ENCODE measurements at regions of chr3 and their contacts with region 1.

Region 1: DNA sequence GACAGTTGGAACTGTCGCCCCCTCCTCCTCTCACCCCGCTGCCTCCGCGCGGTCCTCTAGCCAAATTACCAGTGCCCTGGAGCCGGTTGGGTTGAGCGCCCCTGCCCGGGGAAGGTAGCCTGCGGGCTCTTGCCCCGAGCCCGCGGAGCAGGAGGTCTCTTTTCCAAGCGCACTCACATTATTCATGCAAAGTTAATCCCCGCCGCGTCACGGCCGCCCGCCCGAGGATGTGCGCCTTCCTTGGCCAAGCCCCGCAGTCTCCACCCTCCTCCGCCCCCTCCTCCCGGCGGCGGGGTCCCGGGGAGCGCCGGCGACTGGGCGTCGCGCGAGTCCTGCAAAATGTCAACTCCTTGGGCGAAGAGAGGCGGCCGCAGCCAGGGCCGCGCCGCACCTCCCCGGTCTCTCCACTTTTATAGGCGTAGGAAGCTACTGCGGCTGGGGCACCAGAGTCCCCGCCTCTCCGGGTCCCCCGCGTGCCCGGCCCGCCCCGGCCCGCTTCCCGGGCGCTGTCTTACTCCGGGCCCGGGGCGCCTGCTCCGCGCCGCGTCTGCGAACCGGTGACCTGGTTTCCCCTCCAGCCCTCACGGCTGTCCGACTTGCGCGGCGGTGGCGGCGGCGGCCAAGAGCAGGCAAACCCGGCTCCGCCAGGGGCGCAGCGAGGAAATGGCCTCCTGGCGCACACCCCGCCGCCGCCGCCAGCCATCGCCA is at the start of gene THRB:
- DNase-seq: peak; percentile 79 to 88 (median 85)
- ATAC-seq: peak; percentile 62 to 78 (median 76)
- H3K4me3 ChIP-seq: peak within 1 kb of the TSS; percentile 66 to 89 (median 76)
- H3K27ac ChIP-seq: peak within 1 kb of the TSS; percentile 80 to 97 (median 95)
- H3K4me1 ChIP-seq: peaks cover 0 to 42% (median 21%) of the 10 kb centered on the region in 12 donors
- H3K27me3 ChIP-seq: peaks cover 0 to 14% (median 0%) of the 10 kb centered on the region in 9 donors
- CTCF ChIP-seq: peak in 9 of 12 donors; percentile 6 to 60 (median 35)
- POLR2A ChIP-seq: peak in 1 of 2 donors; percentile 55
- total RNA-seq, gene THRB: 14.9 to 28.5 (median 21.6) TPM

Region 2: DNA sequence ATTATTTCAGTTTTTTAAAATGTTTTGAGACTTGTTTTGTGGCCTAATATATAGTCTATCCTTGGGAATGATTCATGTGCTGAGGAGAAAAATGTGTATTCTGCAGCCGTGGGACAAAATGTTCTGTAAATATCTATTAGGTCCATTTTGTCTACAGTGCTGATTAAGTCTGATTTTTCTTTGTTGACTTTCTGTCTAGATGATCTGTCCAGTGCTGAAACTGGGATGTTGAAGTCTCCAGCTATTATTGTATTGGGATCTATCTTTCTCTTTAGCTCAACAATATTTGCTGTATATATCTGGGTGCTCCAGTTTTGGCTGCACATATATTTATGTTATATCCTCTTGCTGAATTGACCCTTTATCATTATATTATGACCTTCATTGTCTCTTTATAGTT is 1206.5 kb before region 1 on chr3:
- intact Hi-C with region 1: no loop called
- DNase-seq: no peak
- ATAC-seq: no peak
- H3K4me3 ChIP-seq: no peak overlapping the region
- H3K27ac ChIP-seq: no peak overlapping the region
- H3K4me1 ChIP-seq: peaks cover 0 to 5% (median 0%) of the 10 kb centered on the region in 12 donors
- H3K27me3 ChIP-seq: no peaks in the 10 kb centered on the region
- CTCF ChIP-seq: no peak
- POLR2A ChIP-seq: no peak

Region 3: DNA sequence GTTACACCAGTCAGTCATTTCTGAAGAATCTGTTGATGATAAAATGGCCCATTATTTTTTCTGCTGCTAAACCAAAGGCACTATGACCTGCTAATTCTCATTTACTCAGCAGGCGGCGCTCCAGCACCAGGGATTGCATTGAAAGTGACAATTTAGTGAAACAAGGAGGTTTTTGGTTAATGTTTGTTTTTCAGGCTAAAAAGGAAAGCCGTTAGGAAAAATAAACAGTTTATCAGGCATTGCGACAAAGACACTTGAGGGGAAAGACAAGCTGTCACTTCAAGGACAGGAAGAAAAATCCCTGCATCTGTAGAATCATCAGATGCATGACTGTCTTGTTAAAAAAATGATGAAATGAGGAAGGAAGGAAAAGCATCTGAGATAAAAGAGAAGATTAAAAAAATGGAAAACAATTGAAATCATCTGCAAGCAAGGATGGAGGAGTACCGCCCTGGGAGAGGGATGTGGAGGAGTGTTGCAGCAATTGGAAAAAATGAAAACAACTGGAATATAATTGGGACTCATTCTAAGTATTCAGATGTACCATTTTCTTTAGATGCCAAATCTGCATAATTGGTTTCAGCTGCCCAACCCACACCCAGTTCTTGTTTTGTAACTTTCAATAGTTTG is 495.6 kb before region 1 on chr3:
- intact Hi-C with region 1: loop called in 1 of 10 experiments (anchors 10 kb)
- DNase-seq: peak; percentile 48 to 77 (median 63)
- ATAC-seq: peak in 1 of 4 donors; percentile 30
- H3K4me3 ChIP-seq: no peak overlapping the region
- H3K27ac ChIP-seq: no peak overlapping the region
- H3K4me1 ChIP-seq: peaks cover 0 to 16% (median 7%) of the 10 kb centered on the region in 12 donors
- H3K27me3 ChIP-seq: no peaks in the 10 kb centered on the region
- CTCF ChIP-seq: peak; percentile 64 to 95 (median 88)
- POLR2A ChIP-seq: no peak

Region 4: DNA sequence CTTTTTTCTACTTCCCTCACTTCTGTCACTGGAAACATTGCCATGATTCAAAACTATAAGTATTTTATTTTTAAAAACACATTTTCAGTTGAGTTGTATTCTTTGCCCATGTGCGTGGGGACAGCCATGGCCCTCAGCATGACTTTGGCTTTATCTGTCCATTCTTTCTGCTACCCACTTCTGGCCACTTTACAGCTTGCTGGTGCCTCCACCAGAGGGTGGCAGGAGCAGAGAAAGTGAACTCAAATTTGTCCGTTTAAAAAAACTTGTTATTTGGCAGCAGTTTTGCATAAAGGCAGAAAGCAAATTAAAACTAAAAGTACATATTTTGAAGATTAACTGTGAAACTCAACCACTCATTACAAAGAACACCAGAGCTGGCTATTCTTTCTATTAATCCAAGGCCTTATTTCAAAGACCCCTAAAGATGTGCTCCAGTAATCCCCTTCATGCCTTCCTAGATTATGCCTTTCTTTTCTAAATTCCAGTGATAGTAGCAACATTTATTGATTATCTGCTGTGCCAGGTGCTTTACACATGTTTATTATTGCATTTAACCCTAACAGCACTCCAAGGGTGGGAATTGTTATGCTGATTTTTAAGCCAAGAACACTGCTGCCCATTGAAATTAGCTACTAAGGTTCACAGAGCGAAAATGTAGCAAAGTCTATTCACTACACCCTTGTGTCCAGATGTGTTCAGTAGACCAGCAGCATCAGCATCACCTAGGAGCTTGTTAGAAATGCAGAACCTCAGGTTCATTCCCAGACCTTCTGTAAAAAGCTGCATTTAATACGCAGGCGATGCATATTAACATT is 134.9 kb before region 1 on chr3:
- intact Hi-C with region 1: loop called in 9 of 10 experiments (anchors 2 to 10 kb)
- DNase-seq: no peak
- ATAC-seq: no peak
- H3K4me3 ChIP-seq: no peak overlapping the region
- H3K27ac ChIP-seq: no peak overlapping the region
- H3K4me1 ChIP-seq: peaks cover 0 to 43% (median 14%) of the 10 kb centered on the region in 12 donors
- H3K27me3 ChIP-seq: no peaks in the 10 kb centered on the region
- CTCF ChIP-seq: peak in 5 of 12 donors; percentile 9 to 45 (median 35)
- POLR2A ChIP-seq: no peak

Region 5: DNA sequence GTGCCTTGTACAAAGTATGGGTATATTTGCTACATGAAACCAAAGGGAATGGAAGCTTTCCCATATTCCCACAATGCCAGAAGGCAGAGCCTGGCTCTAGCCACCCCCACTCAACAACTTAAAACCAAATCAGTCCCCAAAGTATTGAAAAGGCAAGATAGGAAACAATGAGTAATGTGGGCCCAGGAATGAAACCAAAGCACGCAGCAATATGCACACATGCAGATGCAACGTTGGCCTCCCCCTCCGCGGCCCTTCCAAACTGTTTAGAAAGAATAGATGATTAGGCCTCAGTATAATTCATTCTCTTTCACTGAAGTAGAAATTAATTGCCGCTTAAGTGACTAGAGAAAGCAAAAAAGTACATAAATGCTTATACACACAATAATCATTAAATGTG is 59.2 kb before region 1 on chr3:
- intact Hi-C with region 1: loop called in 2 of 10 experiments (anchors 5 kb)
- DNase-seq: no peak
- ATAC-seq: no peak
- H3K4me3 ChIP-seq: no peak overlapping the region
- H3K27ac ChIP-seq: peak overlapping the region in 1 of 12 donors; percentile 75
- H3K4me1 ChIP-seq: peaks cover 0 to 30% (median 8%) of the 10 kb centered on the region in 12 donors
- H3K27me3 ChIP-seq: no peaks in the 10 kb centered on the region
- CTCF ChIP-seq: no peak
- POLR2A ChIP-seq: no peak

Region 6: GRCh38 chr3:24451461-24452099 is 43.2 kb before region 1 on chr3:
- intact Hi-C with region 1: loop called in 2 of 10 experiments (anchors 5 kb)
- DNase-seq: no peak
- ATAC-seq: peak in 3 of 4 donors; percentile 12 to 38 (median 28)
- H3K4me3 ChIP-seq: no peak overlapping the region
- H3K27ac ChIP-seq: no peak overlapping the region
- H3K4me1 ChIP-seq: peaks cover 0 to 29% (median 8%) of the 10 kb centered on the region in 12 donors
- H3K27me3 ChIP-seq: no peaks in the 10 kb centered on the region
- CTCF ChIP-seq: no peak
- POLR2A ChIP-seq: no peak

Region 7: DNA sequence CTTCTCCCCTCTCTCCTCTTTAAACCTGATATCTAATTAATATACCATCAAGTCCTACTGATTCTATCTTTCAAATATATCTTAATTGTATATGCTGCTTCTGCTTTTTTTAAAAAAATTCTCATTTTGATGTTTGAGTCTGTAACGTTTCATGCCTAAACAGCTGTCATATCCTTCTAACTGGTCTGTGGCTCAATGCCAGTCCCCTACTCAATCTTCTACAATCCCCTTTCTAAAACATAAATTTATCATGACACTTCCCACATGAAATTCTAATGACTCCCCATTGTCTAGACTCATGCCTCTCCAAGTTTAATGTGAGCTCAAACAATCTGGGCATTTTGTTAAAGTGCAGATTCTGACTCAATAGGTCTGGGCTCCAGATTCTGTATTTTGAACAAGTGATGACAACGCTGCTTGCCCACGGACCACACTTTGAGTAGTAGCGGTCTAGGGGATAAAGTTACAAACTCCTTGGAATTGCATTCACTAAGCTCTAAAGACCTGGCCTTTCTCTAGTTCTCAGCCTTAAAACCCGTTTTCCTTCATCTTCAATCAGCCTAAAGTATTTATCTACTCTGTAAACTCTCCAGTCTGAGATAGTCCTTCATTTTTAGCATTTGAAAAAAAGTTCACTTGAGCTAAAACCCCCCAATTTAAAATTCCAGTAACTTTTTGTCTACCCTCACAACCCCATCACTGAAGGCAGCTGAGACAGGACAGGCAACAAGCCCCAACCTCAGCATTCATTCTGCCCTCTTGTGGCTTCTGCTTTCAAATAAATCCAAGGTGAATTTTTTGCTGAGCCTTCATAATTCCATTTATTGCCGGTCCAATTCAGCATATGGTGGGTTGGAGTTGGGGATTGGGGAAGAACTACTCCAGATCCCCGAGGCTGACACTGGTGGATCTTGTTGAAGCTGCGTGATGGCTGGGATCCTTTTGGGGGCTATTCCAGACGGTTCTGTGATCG is 87.9 kb after region 1 on chr3:
- intact Hi-C with region 1: loop called in 1 of 10 experiments (anchors 5 kb)
- DNase-seq: no peak
- ATAC-seq: peak in 3 of 4 donors; percentile 36 to 59 (median 57)
- H3K4me3 ChIP-seq: no peak overlapping the region
- H3K27ac ChIP-seq: no peak overlapping the region
- H3K4me1 ChIP-seq: no peaks in the 10 kb centered on the region
- H3K27me3 ChIP-seq: no peaks in the 10 kb centered on the region
- CTCF ChIP-seq: peak in 11 of 12 donors; percentile 10 to 54 (median 40)
- POLR2A ChIP-seq: no peak

Measured in heart left ventricle (tissue), 16 donors.